Activated naive CD4-positive, alpha-beta T cell treated with anti-CD3 and anti-CD28 coated beads for 36 hours (primary cell): ENCODE measurements at regions of chr18 and their contacts with region 1.

Region 1: DNA sequence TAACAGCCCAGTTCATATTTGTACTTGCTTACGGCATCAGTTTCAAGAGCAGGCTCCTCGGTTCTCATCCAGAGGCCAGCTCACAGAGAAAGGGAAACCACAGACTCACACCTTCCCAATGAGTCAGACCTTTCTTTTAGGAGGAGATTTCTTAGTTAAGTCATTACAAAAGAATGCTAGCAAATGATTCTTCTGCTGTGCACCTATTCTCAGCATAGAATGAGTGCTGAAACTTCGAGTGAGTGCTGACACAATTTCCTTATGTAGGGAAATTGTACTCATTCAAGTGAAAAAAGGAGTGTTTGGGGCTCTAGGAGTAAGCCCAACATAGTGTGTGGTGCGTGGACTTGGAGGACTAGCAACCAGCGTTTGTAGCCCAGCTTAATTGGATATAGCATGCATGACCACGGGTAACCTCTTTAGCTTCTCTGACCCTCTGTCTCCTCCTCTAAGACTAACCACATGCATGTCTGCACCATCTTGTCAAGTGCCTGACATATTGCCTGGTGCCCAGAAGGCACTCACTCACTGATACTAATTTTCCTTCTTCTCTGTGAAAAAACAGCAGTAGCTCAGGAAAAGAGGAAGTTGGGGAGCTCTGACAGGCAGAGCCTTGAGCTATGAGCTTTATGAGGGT is 87.0 kb downstream of the ALPK2 start:
- DNase-seq: peak; percentile 87
- H3K4me3 Mint-ChIP-seq: no peak overlapping the region
- H3K27ac Mint-ChIP-seq: peak overlapping the region; percentile 88
- H3K4me1 Mint-ChIP-seq: peaks cover 83% of the 10 kb centered on the region
- H3K27me3 Mint-ChIP-seq: no peaks in the 10 kb centered on the region

Region 2: GRCh38 chr18:58529714-58530354 is 12.1 kb before region 1 on chr18:
- CTCF ChIA-PET with region 1: interaction called, 24 read pairs
- intact Hi-C with region 1: loop called (anchors 1 kb)
- DNase-seq: peak; percentile 80
- H3K4me3 Mint-ChIP-seq: no peak overlapping the region
- H3K27ac Mint-ChIP-seq: no peak overlapping the region
- H3K4me1 Mint-ChIP-seq: peaks cover 20% of the 10 kb centered on the region
- H3K27me3 Mint-ChIP-seq: peaks cover 3% of the 10 kb centered on the region

Region 3: DNA sequence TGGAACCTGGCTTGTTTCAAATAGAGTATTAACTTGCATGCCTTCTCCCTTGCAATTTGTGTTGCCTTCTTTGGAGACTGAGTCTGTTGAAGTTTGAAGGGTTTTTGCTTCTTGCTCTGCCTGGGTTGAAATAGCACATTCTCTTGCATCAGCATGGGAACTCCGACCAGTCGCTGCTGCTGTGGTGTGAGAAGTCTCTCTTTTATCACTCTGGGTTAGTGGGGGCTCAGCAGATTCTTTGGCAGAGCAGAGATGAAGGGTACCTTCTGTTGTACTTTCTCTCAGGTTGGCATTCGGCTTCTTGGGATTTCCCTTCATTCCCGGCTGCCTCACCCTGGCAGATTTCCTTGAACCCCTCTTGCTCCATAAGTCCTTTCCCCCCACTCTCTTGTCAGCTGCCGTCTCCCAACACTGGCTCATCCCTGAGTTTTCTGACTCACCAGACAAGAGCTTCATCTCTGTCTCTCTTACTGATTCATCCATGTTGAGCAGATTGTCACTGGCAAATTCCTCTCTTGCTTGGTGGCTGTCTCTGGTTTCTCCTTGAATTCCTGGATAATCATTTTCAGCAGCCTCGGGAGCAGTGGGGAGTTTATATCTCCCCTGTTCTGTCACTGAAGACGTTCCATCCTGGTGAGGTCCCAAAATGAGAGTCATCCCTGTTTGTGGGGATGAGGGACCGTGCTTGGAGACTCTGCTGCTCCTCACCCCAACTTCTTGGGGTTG is 37.1 kb after region 1 on chr18:
- CTCF ChIA-PET with region 1: interaction called, 3 read pairs
- intact Hi-C with region 1: loop called (anchors 2 kb)
- DNase-seq: peak; percentile 33
- H3K4me3 Mint-ChIP-seq: peak overlapping the region; percentile 55
- H3K27ac Mint-ChIP-seq: peak overlapping the region; percentile 14
- H3K4me1 Mint-ChIP-seq: peaks cover 24% of the 10 kb centered on the region
- H3K27me3 Mint-ChIP-seq: peaks cover 2% of the 10 kb centered on the region

Region 4: GRCh38 chr18:58615140-58616132 is 73.5 kb after region 1 on chr18:
- CTCF ChIA-PET with region 1: interaction called, 4 read pairs
- intact Hi-C with region 1: loop called (anchors 1 kb)
- DNase-seq: peak; percentile 91
- H3K4me3 Mint-ChIP-seq: peak overlapping the region; percentile 40
- H3K27ac Mint-ChIP-seq: peak overlapping the region; percentile 85
- H3K4me1 Mint-ChIP-seq: peaks cover 46% of the 10 kb centered on the region
- H3K27me3 Mint-ChIP-seq: no peaks in the 10 kb centered on the region

Region 5: GRCh38 chr18:58687871-58688308 is 146.0 kb after region 1 on chr18:
- CTCF ChIA-PET with region 1: interaction called, 3 read pairs
- intact Hi-C with region 1: loop called (anchors 1 kb)
- DNase-seq: peak; percentile 64
- H3K4me3 Mint-ChIP-seq: peak overlapping the region; percentile 70
- H3K27ac Mint-ChIP-seq: peak overlapping the region; percentile 87
- H3K4me1 Mint-ChIP-seq: peaks cover 78% of the 10 kb centered on the region
- H3K27me3 Mint-ChIP-seq: no peaks in the 10 kb centered on the region

Region 6: GRCh38 chr18:59035591-59035990 is 493.7 kb after region 1 on chr18:
- CTCF ChIA-PET with region 1: no interaction called
- intact Hi-C with region 1: loop called (anchors 5 kb)
- DNase-seq: no peak
- H3K4me3 Mint-ChIP-seq: no peak overlapping the region
- H3K27ac Mint-ChIP-seq: no peak overlapping the region
- H3K4me1 Mint-ChIP-seq: peaks cover 18% of the 10 kb centered on the region
- H3K27me3 Mint-ChIP-seq: peaks cover 5% of the 10 kb centered on the region

Region 7: DNA sequence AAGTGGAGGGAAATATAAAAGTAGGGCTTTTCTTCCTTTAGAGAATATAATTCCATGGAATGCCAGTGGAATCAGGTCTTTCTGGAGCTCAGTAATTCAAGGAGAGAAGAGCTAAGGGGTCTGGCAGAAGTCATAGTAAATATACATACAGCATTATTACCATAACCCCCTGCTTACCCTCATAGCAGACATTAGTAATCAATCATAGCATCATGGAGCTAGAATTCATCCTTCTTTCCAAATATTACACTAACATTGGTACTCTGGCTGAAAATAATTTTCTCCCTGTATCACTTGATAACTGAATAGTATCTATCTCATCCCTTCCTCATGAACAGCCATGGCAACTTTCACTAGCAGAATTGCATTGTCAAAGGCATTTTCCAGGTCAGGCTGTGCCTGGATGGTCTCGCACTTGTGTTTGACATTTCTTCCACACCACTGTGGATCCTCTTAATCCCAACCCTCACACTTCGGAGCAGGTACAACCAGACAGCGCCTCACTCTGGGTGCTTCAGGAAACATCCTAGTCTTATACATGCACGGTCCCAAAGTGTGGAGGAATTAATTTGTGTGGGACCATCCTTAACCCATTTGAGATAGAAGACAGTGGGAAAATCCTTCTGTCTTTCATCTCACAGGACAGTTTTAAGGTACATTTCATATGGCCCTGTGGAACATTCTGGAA is 513.6 kb after region 1 on chr18:
- CTCF ChIA-PET with region 1: no interaction called
- intact Hi-C with region 1: no loop called
- DNase-seq: no peak
- H3K4me3 Mint-ChIP-seq: no peak overlapping the region
- H3K27ac Mint-ChIP-seq: no peak overlapping the region
- H3K4me1 Mint-ChIP-seq: no peaks in the 10 kb centered on the region
- H3K27me3 Mint-ChIP-seq: peaks cover 4% of the 10 kb centered on the region

Region 8: GRCh38 chr18:59899298-59900221 is 1357.7 kb after region 1 on chr18 and contains the start of gene PMAIP1:
- CTCF ChIA-PET with region 1: no interaction called
- intact Hi-C with region 1: loop called (anchors 5 kb)
- DNase-seq: peak; percentile 90
- H3K4me3 Mint-ChIP-seq: peak within 1 kb of the TSS; percentile 94
- H3K27ac Mint-ChIP-seq: peak within 1 kb of the TSS; percentile 99
- H3K4me1 Mint-ChIP-seq: peaks cover 29% of the 10 kb centered on the region
- H3K27me3 Mint-ChIP-seq: no peaks in the 10 kb centered on the region
- total RNA-seq, gene PMAIP1: 132 to 141 TPM